CD8-positive, alpha-beta T cell (primary cell): ENCODE measurements at regions of chr4 and their contacts with region 1.

Region 1: DNA sequence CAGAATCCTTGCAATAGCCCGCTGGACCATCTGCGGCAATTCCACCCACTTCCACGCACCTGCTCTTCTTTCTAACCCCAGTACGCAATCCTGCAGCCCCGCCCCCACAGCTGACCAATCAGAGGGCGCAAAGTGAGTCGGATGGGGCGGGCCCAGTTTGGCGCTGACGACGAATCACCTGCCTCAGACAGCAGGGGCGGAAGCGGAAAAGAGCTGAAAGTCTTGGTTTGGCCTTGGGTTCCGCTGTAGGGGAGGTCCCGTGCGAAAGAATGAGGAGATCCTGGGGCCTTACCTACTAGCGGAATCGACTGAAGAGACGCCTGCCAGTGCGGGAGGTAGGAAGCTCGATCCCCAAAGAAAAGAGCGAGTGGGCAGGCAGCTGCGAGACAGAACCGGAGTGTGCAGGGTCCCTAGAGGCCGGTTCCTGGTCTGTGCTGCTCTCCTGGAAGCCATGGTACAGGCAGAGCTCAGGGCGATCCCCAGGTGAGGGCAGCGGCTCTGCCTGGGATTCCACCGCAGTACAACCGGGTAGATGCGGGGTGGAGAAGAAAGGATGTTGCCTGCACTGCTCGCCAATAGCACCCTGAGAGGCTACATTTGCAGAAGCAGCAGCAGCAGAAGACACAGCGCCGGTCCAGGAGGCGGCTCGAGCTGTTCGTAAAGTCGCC is at the start of gene TMEM184C:
- DNase-seq: peak; percentile 98 to 99 (median 99)
- ATAC-seq: peak; percentile 96
- H3K4me3 ChIP-seq: peak within 1 kb of the TSS; percentile 62 to 74
- H3K4me3 Mint-ChIP-seq: peak within 1 kb of the TSS; percentile 91
- H3K27ac ChIP-seq: peak within 1 kb of the TSS; percentile 81
- H3K27ac Mint-ChIP-seq: peak within 1 kb of the TSS; percentile 95
- H3K4me1 ChIP-seq: peaks cover 40% of the 10 kb centered on the region
- H3K4me1 Mint-ChIP-seq: peaks cover 46% of the 10 kb centered on the region
- H3K27me3 ChIP-seq: no peaks in the 10 kb centered on the region
- H3K27me3 Mint-ChIP-seq: no peaks in the 10 kb centered on the region
- CTCF ChIP-seq: no peak
- total RNA-seq, gene TMEM184C: 10.9 to 11.7 TPM

Region 2: DNA sequence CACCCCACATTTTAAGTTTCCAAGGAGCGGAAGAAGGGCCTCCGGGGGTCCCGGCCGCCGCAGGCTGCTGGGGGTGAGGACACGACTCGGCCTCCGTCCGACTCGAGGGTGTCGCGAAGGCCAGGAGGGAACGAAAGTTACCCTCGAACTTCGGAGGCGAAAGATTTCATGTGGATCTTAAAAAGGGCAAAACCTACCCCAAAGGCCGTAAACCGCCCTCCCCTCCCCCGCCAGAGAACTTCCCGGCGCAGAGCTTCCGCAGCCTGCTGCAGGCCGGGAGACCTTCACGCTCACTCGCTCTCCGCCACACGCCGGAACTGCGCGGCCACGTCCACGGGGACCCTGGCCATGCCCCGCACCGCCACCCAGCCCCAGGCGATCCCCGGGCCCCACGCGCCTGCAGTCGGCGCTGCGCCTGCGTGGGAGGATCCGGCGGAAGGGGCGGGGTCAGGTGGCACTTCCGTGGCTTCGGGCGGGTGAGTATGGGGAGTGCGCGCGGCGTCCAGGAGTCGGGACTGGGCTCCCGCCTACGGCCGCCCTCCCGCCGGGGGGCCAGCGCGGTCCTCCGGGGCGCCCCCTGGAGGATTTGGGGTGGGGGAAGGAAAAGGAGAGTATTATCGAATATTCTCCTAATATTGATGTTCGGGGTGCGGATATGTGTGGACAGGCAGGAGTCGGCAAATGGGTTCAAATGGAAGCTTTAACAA is 1998.2 kb before region 1 on chr4 and contains the start of gene MMAA:
- CTCF ChIA-PET with region 1: no interaction called
- POLR2A ChIA-PET with region 1: no interaction called
- intact Hi-C with region 1: loop called (anchors 2 to 5 kb)
- DNase-seq: peak; percentile 86 to 97 (median 94)
- ATAC-seq: peak; percentile 93
- H3K4me3 ChIP-seq: peak within 1 kb of the TSS; percentile 89 to 97
- H3K4me3 Mint-ChIP-seq: peak within 1 kb of the TSS; percentile 96
- H3K27ac ChIP-seq: peak within 1 kb of the TSS; percentile 91 to 97
- H3K27ac Mint-ChIP-seq: peak within 1 kb of the TSS; percentile 98
- H3K4me1 ChIP-seq: peaks cover 22% of the 10 kb centered on the region
- H3K4me1 Mint-ChIP-seq: peaks cover 45% of the 10 kb centered on the region
- H3K27me3 ChIP-seq: no peaks in the 10 kb centered on the region
- H3K27me3 Mint-ChIP-seq: no peaks in the 10 kb centered on the region
- CTCF ChIP-seq: peak; percentile 38
- total RNA-seq, gene MMAA: 7.6 to 9.4 TPM

Region 3: DNA sequence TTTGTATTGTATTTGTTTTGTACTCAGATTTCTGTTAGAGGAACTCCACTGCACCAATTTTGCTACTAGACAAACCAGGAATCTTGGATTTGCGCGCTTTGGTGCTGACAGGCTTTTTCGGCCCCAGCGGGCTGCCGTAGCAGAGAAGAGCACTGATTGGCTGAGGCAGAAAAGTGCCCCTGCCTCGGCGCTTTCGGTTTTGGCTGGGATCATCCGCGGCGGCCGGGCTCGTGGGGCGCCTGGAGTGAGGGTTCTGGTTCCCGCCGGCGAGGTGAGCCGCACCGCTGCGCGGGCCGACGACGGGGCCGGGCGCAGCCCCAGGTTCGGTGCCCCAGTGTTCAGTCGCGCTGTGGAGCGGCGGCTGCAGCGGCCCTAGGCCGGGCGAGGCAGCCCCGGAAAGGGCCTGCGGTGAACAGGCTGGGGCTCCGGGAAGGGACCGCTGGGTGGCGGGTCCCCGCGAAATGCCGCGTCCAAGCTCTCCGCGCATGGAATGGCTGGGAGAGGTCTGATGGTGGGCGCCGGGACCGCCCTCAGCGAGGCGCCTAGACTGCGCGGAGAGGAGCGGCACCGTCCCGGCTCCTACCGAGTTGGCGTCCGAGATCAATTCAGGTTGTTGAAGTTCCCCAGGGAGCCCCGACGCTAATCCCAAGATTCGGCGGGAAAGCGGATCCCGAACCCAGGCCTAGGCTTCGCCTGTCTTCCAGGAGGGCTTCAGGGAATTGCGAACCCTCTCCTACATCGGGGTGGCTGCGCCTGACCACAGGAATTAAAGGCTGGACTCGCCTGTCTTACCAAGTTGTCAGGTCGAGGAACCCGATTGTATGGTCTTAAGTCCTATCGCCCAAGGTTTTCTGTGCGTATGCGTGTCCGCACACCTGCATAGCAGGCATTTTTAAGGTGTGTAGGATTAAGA is 1441.5 kb before region 1 on chr4 and contains the start of gene LSM6:
- CTCF ChIA-PET with region 1: no interaction called
- POLR2A ChIA-PET with region 1: no interaction called
- intact Hi-C with region 1: loop called in 1 of 2 experiments (anchors 10 kb)
- DNase-seq: peak; percentile 60 to 92 (median 79)
- ATAC-seq: peak; percentile 90
- H3K4me3 ChIP-seq: peak within 1 kb of the TSS; percentile 88 to 97
- H3K4me3 Mint-ChIP-seq: peak within 1 kb of the TSS; percentile 91
- H3K27ac ChIP-seq: peak within 1 kb of the TSS; percentile 69 to 83
- H3K27ac Mint-ChIP-seq: peak within 1 kb of the TSS; percentile 95
- H3K4me1 ChIP-seq: peaks cover 48% of the 10 kb centered on the region
- H3K4me1 Mint-ChIP-seq: peaks cover 59% of the 10 kb centered on the region
- H3K27me3 ChIP-seq: no peaks in the 10 kb centered on the region
- H3K27me3 Mint-ChIP-seq: no peaks in the 10 kb centered on the region
- CTCF ChIP-seq: no peak
- total RNA-seq, gene LSM6: 17.6 to 20.6 TPM

Region 4: DNA sequence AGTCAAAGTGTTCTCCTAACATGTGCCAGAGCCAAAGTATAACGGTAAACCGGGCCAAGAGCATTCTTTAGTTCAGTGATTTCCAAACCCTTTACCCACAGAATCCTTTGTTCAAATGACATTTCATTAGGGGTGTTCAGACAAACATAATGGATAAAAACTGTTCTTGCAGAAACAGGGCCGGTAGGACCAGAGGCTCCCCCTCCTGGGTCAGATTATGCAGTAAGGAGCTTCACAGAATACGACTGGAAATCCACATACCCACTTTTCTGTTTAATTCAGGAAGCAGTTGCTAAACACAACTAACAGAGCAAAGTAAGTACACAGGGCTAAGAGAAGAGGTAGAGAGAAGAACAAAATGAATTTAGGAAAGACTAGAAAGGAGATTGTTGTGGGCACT is 46.7 kb before region 1 on chr4:
- CTCF ChIA-PET with region 1: no interaction called
- POLR2A ChIA-PET with region 1: no interaction called
- intact Hi-C with region 1: no loop called
- DNase-seq: no peak
- ATAC-seq: no peak
- H3K4me3 ChIP-seq: no peak overlapping the region
- H3K4me3 Mint-ChIP-seq: no peak overlapping the region
- H3K27ac ChIP-seq: no peak overlapping the region
- H3K27ac Mint-ChIP-seq: no peak overlapping the region
- H3K4me1 ChIP-seq: no peaks in the 10 kb centered on the region
- H3K4me1 Mint-ChIP-seq: no peaks in the 10 kb centered on the region
- H3K27me3 ChIP-seq: no peaks in the 10 kb centered on the region
- H3K27me3 Mint-ChIP-seq: peaks cover 6% of the 10 kb centered on the region
- CTCF ChIP-seq: no peak

Region 5: DNA sequence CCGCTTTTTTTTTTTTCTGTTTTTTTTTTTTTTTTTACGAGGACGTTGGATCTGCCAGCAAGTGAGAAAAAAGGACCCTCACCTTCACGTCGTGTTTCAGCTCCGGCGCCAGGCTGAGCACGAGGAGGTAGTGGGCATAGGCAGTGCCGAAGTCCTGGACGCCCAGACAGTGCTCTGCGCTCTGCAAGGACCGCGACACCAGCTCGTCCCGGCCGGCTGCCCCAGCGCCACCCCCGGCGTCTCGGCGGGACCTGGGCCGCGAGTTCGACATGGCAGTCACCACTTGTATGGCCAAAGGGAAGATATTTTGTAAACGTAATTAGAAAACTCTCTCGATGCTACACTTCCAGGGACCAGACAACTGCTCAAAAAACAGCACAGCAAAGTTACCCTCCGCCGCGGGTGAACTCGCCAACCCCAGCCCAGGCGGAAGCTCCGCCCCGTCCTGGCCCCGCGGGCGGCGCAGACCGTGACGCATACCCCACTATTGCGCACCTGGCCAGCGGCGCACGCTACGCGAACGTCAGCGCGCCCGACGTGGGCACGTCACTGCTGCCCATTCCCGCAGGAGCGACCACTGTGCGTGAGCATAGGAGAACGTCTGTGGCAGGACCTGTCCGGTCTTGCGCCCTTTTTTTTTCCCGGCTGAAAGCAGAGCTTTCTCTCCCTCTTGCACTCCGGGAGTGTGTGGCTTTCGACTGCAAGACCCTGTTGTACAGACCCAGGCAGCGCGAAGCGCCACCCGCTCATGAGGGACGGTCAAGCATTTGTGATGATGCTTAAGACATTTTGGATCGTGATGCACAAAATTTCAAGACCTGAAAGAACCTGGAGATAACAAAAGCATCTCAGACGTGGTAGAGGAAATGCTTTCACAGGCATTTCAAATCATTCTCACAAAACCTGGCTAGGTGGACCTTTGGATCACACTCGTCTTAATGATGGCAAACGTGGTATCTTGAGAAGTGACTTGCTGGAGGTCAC is 66.7 kb after region 1 on chr4 and contains the start of gene PRMT9:
- CTCF ChIA-PET with region 1: interaction called, 4 read pairs
- POLR2A ChIA-PET with region 1: interaction called, 30 read pairs
- intact Hi-C with region 1: loop called (anchors 1 kb)
- DNase-seq: peak; percentile 74 to 94 (median 88)
- ATAC-seq: peak; percentile 97
- H3K4me3 ChIP-seq: peak within 1 kb of the TSS; percentile 68 to 98
- H3K4me3 Mint-ChIP-seq: peak within 1 kb of the TSS; percentile 98
- H3K27ac ChIP-seq: peak within 1 kb of the TSS; percentile 92 to 98
- H3K27ac Mint-ChIP-seq: peak within 1 kb of the TSS; percentile 99
- H3K4me1 ChIP-seq: peaks cover 11% of the 10 kb centered on the region
- H3K4me1 Mint-ChIP-seq: peaks cover 40% of the 10 kb centered on the region
- H3K27me3 ChIP-seq: no peaks in the 10 kb centered on the region
- H3K27me3 Mint-ChIP-seq: peaks cover 8% of the 10 kb centered on the region
- CTCF ChIP-seq: no peak
- total RNA-seq, gene PRMT9: 36.4 to 40.3 TPM

Region 6: DNA sequence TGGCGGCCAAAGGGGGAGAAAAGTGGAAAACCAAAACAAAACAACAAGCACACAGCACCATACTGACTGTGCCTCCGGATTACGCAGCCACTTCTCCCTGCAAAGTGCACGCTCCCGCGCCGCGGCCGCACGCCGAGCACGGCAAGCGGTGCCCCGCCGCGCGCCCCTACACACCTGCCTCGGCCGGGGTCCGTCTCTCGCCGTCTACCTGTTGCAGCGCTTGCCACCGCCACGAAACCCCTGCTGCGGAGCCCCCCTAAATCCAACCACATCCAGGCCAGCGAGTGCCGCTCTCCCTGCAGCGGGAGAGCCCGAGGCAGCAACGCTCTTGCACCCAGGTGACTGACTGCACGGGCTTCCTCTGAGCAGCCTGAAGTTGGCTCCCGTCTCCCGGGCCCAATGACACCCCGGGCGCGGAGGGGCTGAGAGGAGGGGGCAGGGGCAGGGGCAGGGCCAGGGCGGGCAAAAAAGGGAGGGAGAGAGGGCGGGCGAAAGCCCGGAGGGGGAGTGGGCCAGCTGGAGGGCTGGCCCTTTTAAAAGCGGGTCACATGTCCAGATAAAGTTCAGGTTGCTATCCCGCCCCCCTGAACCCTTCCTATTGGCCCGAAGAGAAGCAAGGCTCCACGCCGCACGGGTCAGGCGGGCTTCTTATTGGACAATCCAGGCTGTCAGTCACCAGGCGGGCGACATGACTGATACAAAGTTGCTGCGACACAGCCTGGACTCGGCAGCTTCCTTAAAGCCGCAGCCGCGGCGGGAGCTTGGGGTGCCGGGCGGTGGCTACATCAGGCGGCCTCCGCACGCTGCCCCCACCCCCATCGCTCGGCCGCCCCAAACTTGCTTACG is 824.9 kb after region 1 on chr4 and contains the start of gene NR3C2:
- CTCF ChIA-PET with region 1: no interaction called
- POLR2A ChIA-PET with region 1: interaction called, 6 read pairs
- intact Hi-C with region 1: loop called (anchors 2 to 10 kb)
- DNase-seq: peak; percentile 95 to 99 (median 97)
- ATAC-seq: peak; percentile 74
- H3K4me3 ChIP-seq: peak within 1 kb of the TSS; percentile 95
- H3K4me3 Mint-ChIP-seq: peak within 1 kb of the TSS; percentile 98
- H3K27ac ChIP-seq: peak within 1 kb of the TSS; percentile 93 to 99
- H3K27ac Mint-ChIP-seq: peak within 1 kb of the TSS; percentile 99
- H3K4me1 ChIP-seq: peaks cover 48% of the 10 kb centered on the region
- H3K4me1 Mint-ChIP-seq: peaks cover 53% of the 10 kb centered on the region
- H3K27me3 ChIP-seq: no peaks in the 10 kb centered on the region
- H3K27me3 Mint-ChIP-seq: no peaks in the 10 kb centered on the region
- CTCF ChIP-seq: no peak
- total RNA-seq, gene NR3C2: 29.6 to 32.4 TPM